Caco-2 (cell line): ENCODE measurements at regions of chr18 and their contacts with region 1.

Region 1: DNA sequence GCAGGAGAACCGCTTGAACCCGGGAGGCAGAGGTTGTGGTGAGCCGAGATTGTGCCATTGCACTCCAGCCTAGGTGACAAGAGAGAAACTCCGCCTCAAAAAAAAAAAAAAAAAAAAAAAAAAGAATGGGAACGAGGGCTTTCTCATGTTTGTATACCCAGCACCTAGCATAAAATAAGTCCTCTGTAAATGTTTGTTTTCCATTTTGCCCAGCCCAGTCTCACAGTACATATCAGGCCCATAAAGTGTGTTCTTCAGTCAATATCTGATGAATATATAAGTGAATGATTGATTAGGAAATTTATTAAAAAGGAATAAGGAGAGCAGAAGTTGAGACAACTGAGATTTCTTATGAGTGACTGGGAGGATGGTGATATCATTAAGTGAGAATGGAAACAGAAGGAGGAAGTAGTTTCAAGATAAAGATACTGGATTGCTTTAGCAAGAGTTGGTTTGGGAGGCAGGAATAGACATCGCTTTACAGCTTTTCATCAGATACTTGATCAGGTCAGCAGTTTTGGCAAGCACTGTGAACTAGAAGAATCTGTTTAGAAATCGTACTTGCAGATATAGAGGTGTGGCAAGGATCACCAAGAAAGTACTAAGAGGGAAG is 327.5 kb downstream of the KIAA1328 start:
- DNase-seq: no peak
- H3K4me3 ChIP-seq: no peak overlapping the region
- H3K4me3 Mint-ChIP-seq: no peak overlapping the region
- H3K27ac Mint-ChIP-seq: no peak overlapping the region
- H3K4me1 ChIP-seq: no peaks in the 10 kb centered on the region
- H3K4me1 Mint-ChIP-seq: peaks cover 10% of the 10 kb centered on the region
- H3K27me3 ChIP-seq: no peaks in the 10 kb centered on the region
- H3K27me3 Mint-ChIP-seq: no peaks in the 10 kb centered on the region
- CTCF ChIP-seq: no peak

Region 2: GRCh38 chr18:37138456-37138855 is 18.0 kb before region 1 on chr18:
- CTCF ChIA-PET with region 1: no interaction called
- POLR2A ChIA-PET with region 1: interaction called, 16 read pairs
- intact Hi-C with region 1: no loop called
- DNase-seq: no peak
- H3K4me3 ChIP-seq: no peak overlapping the region
- H3K4me3 Mint-ChIP-seq: no peak overlapping the region
- H3K27ac Mint-ChIP-seq: no peak overlapping the region
- H3K4me1 ChIP-seq: no peaks in the 10 kb centered on the region
- H3K4me1 Mint-ChIP-seq: peaks cover 10% of the 10 kb centered on the region
- H3K27me3 ChIP-seq: no peaks in the 10 kb centered on the region
- H3K27me3 Mint-ChIP-seq: no peaks in the 10 kb centered on the region
- CTCF ChIP-seq: no peak

Region 3: GRCh38 chr18:37322492-37323035 is 166.1 kb after region 1 on chr18:
- CTCF ChIA-PET with region 1: no interaction called
- POLR2A ChIA-PET with region 1: no interaction called
- intact Hi-C with region 1: no loop called
- DNase-seq: peak; percentile 33 to 34
- H3K4me3 ChIP-seq: no peak overlapping the region
- H3K4me3 Mint-ChIP-seq: no peak overlapping the region
- H3K27ac Mint-ChIP-seq: no peak overlapping the region
- H3K4me1 ChIP-seq: no peaks in the 10 kb centered on the region
- H3K4me1 Mint-ChIP-seq: no peaks in the 10 kb centered on the region
- H3K27me3 ChIP-seq: no peaks in the 10 kb centered on the region
- H3K27me3 Mint-ChIP-seq: no peaks in the 10 kb centered on the region
- CTCF ChIP-seq: peak; percentile 43 to 64

Region 4: GRCh38 chr18:37364237-37364636 is 207.8 kb after region 1 on chr18:
- CTCF ChIA-PET with region 1: no interaction called
- POLR2A ChIA-PET with region 1: no interaction called
- intact Hi-C with region 1: no loop called
- DNase-seq: no peak
- H3K4me3 ChIP-seq: no peak overlapping the region
- H3K4me3 Mint-ChIP-seq: no peak overlapping the region
- H3K27ac Mint-ChIP-seq: no peak overlapping the region
- H3K4me1 ChIP-seq: no peaks in the 10 kb centered on the region
- H3K4me1 Mint-ChIP-seq: no peaks in the 10 kb centered on the region
- H3K27me3 ChIP-seq: no peaks in the 10 kb centered on the region; the same call in 1 of the 2 replicates
- H3K27me3 Mint-ChIP-seq: peaks cover 15% of the 10 kb centered on the region
- CTCF ChIP-seq: no peak